Colonic mucosa (tissue), 4 donors: ENCODE measurements at regions of chr10 and their contacts with region 1.

Region 1: GRCh38 chr10:71727738-71728737 is 8.5 kb upstream of the C10orf105 start:
- DNase-seq: peak; percentile 92
- H3K4me3 ChIP-seq: no peak overlapping the region
- H3K27ac ChIP-seq: peak overlapping the region; percentile 84
- H3K4me1 ChIP-seq: peaks cover 31% of the 10 kb centered on the region
- H3K27me3 ChIP-seq: no peaks in the 10 kb centered on the region
- CTCF ChIP-seq: no peak

Region 2: DNA sequence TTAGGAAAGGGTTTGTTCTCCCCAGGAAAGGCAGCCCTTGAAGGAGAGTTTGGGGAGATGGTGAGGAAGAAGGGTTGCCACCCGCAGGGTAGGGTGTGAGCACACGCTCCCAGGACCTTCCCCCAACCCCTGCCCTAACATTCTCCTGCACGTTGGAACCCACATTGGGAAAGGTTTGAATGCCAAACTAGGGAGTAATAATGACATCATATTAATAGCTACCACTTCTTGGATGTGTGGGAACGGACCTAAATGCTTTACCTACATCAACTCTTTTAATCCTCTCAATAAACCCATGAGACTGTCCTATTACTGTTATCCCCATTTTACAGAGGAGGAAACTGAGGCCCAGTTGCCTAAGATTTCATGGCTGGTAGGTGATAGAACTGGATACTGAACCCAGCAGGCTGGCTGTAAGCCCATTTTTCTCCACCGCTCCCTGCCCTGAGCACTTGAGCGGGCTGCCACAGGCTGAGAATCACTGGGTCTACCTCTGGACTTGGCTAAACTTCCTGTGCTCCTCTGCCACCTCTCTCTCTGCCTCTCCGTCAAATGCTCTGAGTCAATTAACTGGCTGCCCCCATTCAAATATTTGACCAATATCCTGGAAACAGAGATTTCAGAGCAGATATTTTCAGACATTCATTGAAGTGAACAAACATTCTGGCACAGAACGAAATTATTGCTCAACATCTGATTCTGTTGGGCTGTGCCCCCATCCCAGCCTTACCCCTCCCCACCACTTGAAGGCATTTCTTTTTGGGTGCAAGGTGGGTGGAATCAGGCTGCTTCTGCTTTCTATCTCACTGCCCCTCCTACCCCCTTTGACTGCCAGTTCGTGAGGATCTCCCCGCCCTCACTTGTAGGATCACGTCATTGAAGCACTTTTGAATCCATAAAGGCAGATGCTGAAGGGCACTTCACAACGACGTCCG is 138.2 kb before region 1 on chr10:
- intact Hi-C with region 1: no loop called
- DNase-seq: no peak
- H3K4me3 ChIP-seq: no peak overlapping the region
- H3K27ac ChIP-seq: no peak overlapping the region
- H3K4me1 ChIP-seq: no peaks in the 10 kb centered on the region
- H3K27me3 ChIP-seq: no peaks in the 10 kb centered on the region
- CTCF ChIP-seq: no peak

Region 3: GRCh38 chr10:71771821-71772617 is 44.0 kb after region 1 on chr10:
- intact Hi-C with region 1: loop called (anchors 5 kb)
- DNase-seq: peak; percentile 82
- H3K4me3 ChIP-seq: peak overlapping the region; percentile 80
- H3K27ac ChIP-seq: peak overlapping the region; percentile 92
- H3K4me1 ChIP-seq: peaks cover 16% of the 10 kb centered on the region
- H3K27me3 ChIP-seq: no peaks in the 10 kb centered on the region
- CTCF ChIP-seq: no peak